ENCODE measurements at regions of chr7 and their contacts with region 1.

Region 1: GRCh38 chr7:23487670-23488069 is 17.4 kb upstream of the IGF2BP3 start:
- DNase-seq: no peak
- H3K4me3 ChIP-seq: no peak overlapping the region
- H3K27ac ChIP-seq: no peak overlapping the region
- H3K4me1 ChIP-seq: peaks cover 6% of the 10 kb centered on the region; the same call in 1 of the 2 replicates
- H3K27me3 ChIP-seq: no peaks in the 10 kb centered on the region
- CTCF ChIP-seq: no peak

Region 2: GRCh38 chr7:23514755-23515154 is 27.1 kb after region 1 on chr7:
- CTCF ChIA-PET with region 1: no interaction called
- POLR2A ChIA-PET with region 1: no interaction called
- intact Hi-C with region 1: no loop called
- DNase-seq: no peak
- H3K4me3 ChIP-seq: no peak overlapping the region
- H3K27ac ChIP-seq: no peak overlapping the region
- H3K4me1 ChIP-seq: no peaks in the 10 kb centered on the region
- H3K27me3 ChIP-seq: no peaks in the 10 kb centered on the region
- CTCF ChIP-seq: no peak

Region 3: DNA sequence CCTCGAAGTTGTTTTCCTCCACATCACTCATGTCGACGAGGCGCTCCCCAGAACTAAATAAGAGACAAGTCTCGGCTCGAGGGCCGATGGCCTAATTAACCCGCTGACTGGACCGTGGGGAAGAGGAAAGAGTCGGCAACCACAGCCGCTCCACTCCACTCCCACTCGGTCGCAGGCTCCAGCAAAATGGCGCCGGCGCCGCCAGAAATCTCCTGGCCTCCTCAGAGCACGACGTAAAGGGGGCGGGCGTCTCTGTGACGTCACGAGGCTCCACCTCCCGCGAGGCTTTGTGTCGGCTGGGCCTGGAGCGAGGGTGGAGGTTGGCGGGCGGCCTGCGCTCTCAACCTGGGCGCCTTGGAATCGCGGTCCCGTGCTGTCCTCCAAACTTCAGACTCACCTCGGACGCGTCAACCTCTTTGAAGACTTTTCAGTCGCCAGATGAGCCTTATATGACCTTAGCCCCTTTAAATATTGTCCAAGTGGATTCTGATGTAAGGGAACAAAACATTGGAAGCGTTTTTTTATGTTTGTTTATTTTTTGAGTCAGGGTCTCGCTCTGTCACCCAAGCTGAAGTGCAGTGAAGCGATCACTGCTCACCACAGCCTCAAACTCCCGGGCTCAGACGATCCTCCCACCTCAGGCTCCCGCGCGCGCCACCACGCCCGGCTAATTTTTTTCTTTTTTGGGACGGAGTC is 44.3 kb after region 1 on chr7 and contains the start of gene TRA2A:
- CTCF ChIA-PET with region 1: no interaction called
- POLR2A ChIA-PET with region 1: interaction called, 13 read pairs
- intact Hi-C with region 1: no loop called
- DNase-seq: peak; percentile 91 to 98
- H3K4me3 ChIP-seq: peak within 1 kb of the TSS; percentile 89
- H3K27ac ChIP-seq: peak within 1 kb of the TSS; percentile 89
- H3K4me1 ChIP-seq: peaks cover 36% of the 10 kb centered on the region
- H3K27me3 ChIP-seq: no peaks in the 10 kb centered on the region
- CTCF ChIP-seq: no peak
- total RNA-seq, gene TRA2A: 77.0 and 112 TPM in 2 replicates

Region 4: GRCh38 chr7:23542752-23543151 is 55.1 kb after region 1 on chr7:
- CTCF ChIA-PET with region 1: no interaction called
- POLR2A ChIA-PET with region 1: no interaction called
- intact Hi-C with region 1: no loop called
- DNase-seq: no peak
- H3K4me3 ChIP-seq: no peak overlapping the region
- H3K27ac ChIP-seq: no peak overlapping the region
- H3K4me1 ChIP-seq: no peaks in the 10 kb centered on the region
- H3K27me3 ChIP-seq: no peaks in the 10 kb centered on the region
- CTCF ChIP-seq: no peak